ENCODE measurements at regions of chrX and their contacts with region 1.

Region 1: GRCh38 chrX:52995135-52996020 is 37.1 kb upstream of the FAM156A start:
- DNase-seq: peak; percentile 82 to 96 (median 87)
- ATAC-seq: peak; percentile 95
- H3K4me3 ChIP-seq: peak overlapping the region; percentile 61
- H3K4me3 Mint-ChIP-seq: peak overlapping the region; percentile 99
- H3K27ac ChIP-seq: peak overlapping the region; percentile 84 to 95
- H3K27ac Mint-ChIP-seq: peak overlapping the region; percentile 99
- H3K4me1 ChIP-seq: peaks cover 27% of the 10 kb centered on the region
- H3K4me1 Mint-ChIP-seq: peaks cover 25% of the 10 kb centered on the region
- H3K27me3 ChIP-seq: no peaks in the 10 kb centered on the region
- H3K27me3 Mint-ChIP-seq: no peaks in the 10 kb centered on the region
- CTCF ChIP-seq: peak; percentile 65

Region 2: GRCh38 chrX:51406688-51407461 is 1588.5 kb before region 1 on chrX:
- CTCF ChIA-PET with region 1: no interaction called
- POLR2A ChIA-PET with region 1: no interaction called
- intact Hi-C with region 1: no loop called
- DNase-seq: no peak
- ATAC-seq: no peak
- H3K4me3 ChIP-seq: no peak overlapping the region
- H3K4me3 Mint-ChIP-seq: no peak overlapping the region
- H3K27ac ChIP-seq: no peak overlapping the region
- H3K27ac Mint-ChIP-seq: no peak overlapping the region
- H3K4me1 ChIP-seq: no peaks in the 10 kb centered on the region
- H3K4me1 Mint-ChIP-seq: no peaks in the 10 kb centered on the region
- H3K27me3 ChIP-seq: no peaks in the 10 kb centered on the region
- H3K27me3 Mint-ChIP-seq: no peaks in the 10 kb centered on the region
- CTCF ChIP-seq: no peak

Region 3: DNA sequence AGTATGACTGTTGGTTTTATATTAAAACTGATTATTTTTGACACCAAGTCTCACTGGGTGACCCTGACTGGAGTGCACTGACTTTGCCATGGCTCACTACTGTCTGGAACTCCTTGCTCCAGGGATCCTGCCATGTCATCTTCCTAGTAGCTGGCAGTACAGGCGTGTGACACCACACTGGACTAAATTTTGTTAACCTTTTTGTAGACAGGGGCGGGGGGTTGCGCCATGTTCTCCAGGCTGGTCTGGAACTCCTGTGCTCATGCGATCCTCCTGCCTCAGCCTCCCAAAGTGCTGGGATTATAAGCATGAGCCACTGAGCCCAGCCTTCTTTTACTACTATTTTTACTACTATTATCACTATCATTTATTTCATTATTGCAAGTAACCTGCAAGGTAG is 490.8 kb before region 1 on chrX:
- CTCF ChIA-PET with region 1: no interaction called
- POLR2A ChIA-PET with region 1: no interaction called
- intact Hi-C with region 1: no loop called
- DNase-seq: no peak
- ATAC-seq: no peak
- H3K4me3 ChIP-seq: no peak overlapping the region
- H3K4me3 Mint-ChIP-seq: no peak overlapping the region
- H3K27ac ChIP-seq: no peak overlapping the region
- H3K27ac Mint-ChIP-seq: no peak overlapping the region
- H3K4me1 ChIP-seq: no peaks in the 10 kb centered on the region
- H3K4me1 Mint-ChIP-seq: no peaks in the 10 kb centered on the region
- H3K27me3 ChIP-seq: no peaks in the 10 kb centered on the region
- H3K27me3 Mint-ChIP-seq: no peaks in the 10 kb centered on the region
- CTCF ChIP-seq: no peak

Region 4: GRCh38 chrX:52574416-52575275 is 420.7 kb before region 1 on chrX:
- CTCF ChIA-PET with region 1: no interaction called
- POLR2A ChIA-PET with region 1: no interaction called
- intact Hi-C with region 1: loop called in 1 of 2 experiments (anchors 5 kb)
- DNase-seq: peak in 8 of 14 experiments; percentile 2 to 59 (median 26)
- ATAC-seq: no peak
- H3K4me3 ChIP-seq: no peak overlapping the region
- H3K4me3 Mint-ChIP-seq: no peak overlapping the region
- H3K27ac ChIP-seq: no peak overlapping the region
- H3K27ac Mint-ChIP-seq: no peak overlapping the region
- H3K4me1 ChIP-seq: peaks cover 2% of the 10 kb centered on the region
- H3K4me1 Mint-ChIP-seq: peaks cover 4% of the 10 kb centered on the region
- H3K27me3 ChIP-seq: peaks cover 0 to 3% of the 10 kb centered on the region in 2 experiments
- H3K27me3 Mint-ChIP-seq: peaks cover 4% of the 10 kb centered on the region
- CTCF ChIP-seq: peak; percentile 55

Region 5: GRCh38 chrX:52852110-52852865 is 143.1 kb before region 1 on chrX:
- CTCF ChIA-PET with region 1: no interaction called
- POLR2A ChIA-PET with region 1: no interaction called
- intact Hi-C with region 1: no loop called
- DNase-seq: no peak
- ATAC-seq: no peak
- H3K4me3 ChIP-seq: no peak overlapping the region
- H3K4me3 Mint-ChIP-seq: no peak overlapping the region
- H3K27ac ChIP-seq: no peak overlapping the region
- H3K27ac Mint-ChIP-seq: no peak overlapping the region
- H3K4me1 ChIP-seq: no peaks in the 10 kb centered on the region
- H3K4me1 Mint-ChIP-seq: no peaks in the 10 kb centered on the region
- H3K27me3 ChIP-seq: peaks cover 0 to 2% of the 10 kb centered on the region in 2 experiments
- H3K27me3 Mint-ChIP-seq: peaks cover 10% of the 10 kb centered on the region
- CTCF ChIP-seq: no peak

Region 6: GRCh38 chrX:53013291-53013690 is 17.9 kb after region 1 on chrX:
- CTCF ChIA-PET with region 1: no interaction called
- POLR2A ChIA-PET with region 1: no interaction called
- intact Hi-C with region 1: no loop called
- DNase-seq: no peak
- ATAC-seq: no peak
- H3K4me3 ChIP-seq: no peak overlapping the region
- H3K4me3 Mint-ChIP-seq: no peak overlapping the region
- H3K27ac ChIP-seq: no peak overlapping the region
- H3K27ac Mint-ChIP-seq: no peak overlapping the region
- H3K4me1 ChIP-seq: no peaks in the 10 kb centered on the region
- H3K4me1 Mint-ChIP-seq: no peaks in the 10 kb centered on the region
- H3K27me3 ChIP-seq: no peaks in the 10 kb centered on the region
- H3K27me3 Mint-ChIP-seq: no peaks in the 10 kb centered on the region
- CTCF ChIP-seq: no peak

Region 7: GRCh38 chrX:53093748-53094583 is 98.6 kb after region 1 on chrX and contains the start of gene KANTR:
- CTCF ChIA-PET with region 1: no interaction called
- POLR2A ChIA-PET with region 1: no interaction called
- intact Hi-C with region 1: loop called in 1 of 2 experiments (anchors 5 kb)
- DNase-seq: peak; percentile 36 to 92 (median 72)
- ATAC-seq: peak; percentile 76
- H3K4me3 ChIP-seq: peak within 1 kb of the TSS; percentile 81
- H3K4me3 Mint-ChIP-seq: peak within 1 kb of the TSS; percentile 93
- H3K27ac ChIP-seq: peak within 1 kb of the TSS; percentile 58 to 85
- H3K27ac Mint-ChIP-seq: peak within 1 kb of the TSS; percentile 93
- H3K4me1 ChIP-seq: peaks cover 16% of the 10 kb centered on the region
- H3K4me1 Mint-ChIP-seq: peaks cover 35% of the 10 kb centered on the region
- H3K27me3 ChIP-seq: no peaks in the 10 kb centered on the region
- H3K27me3 Mint-ChIP-seq: no peaks in the 10 kb centered on the region
- CTCF ChIP-seq: no peak
- total RNA-seq, gene KANTR: 6.2 to 6.8 TPM